Activated B cell treated with CpG ODN at 0.5 μM for 24 hours (primary cell): ENCODE measurements at regions of chr18 and their contacts with region 1.

Region 1: DNA sequence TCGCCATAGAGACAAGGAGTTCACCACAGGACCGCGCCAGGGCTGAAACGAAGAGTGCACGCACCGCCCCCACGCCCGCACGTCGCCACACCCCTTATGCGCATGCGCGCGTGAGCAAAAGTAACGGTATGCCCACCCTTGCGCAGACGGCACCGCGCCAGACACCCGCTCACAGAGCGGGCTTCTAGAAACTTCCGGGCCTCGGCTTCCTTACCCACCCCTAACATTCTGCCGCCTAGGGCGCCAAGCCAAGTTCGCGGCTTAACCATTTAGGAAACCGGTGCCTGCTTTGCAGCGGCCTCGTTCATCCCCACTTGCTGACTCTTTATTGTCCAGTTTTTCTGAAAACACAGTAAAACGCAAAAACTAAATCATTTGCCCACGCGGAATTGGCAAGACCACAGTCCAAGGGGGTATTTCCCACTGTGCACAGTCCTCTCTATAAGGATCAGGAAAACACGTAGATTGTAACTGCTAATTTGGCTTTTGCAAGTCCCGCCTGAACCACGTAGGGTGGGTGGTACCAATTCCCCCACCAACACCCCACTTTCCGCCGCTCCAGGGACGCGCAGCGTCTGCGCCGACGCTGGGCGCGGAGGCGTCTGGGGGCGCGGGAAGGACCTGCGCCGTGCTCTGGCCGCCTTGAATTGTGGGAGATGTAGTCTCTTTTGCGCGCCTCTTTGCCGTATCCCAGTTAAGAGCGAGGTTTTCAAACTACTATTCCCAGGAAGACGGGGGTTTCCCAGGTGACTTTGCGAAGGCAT is at the starts of genes FBXO15 and TIMM21:
- DNase-seq: peak; percentile 96
- ATAC-seq: peak; percentile 85
- H3K4me3 Mint-ChIP-seq: peak within 1 kb of the TSS; percentile 97
- H3K27ac Mint-ChIP-seq: peak within 1 kb of the TSS; percentile 99
- H3K4me1 Mint-ChIP-seq: peaks cover 48% of the 10 kb centered on the region
- H3K27me3 Mint-ChIP-seq: peaks cover 1% of the 10 kb centered on the region
- CTCF ChIP-seq: no peak
- total RNA-seq, gene FBXO15: 0.69 and 0.98 TPM in 2 replicates
- total RNA-seq, gene TIMM21: 23.3 and 27.0 TPM in 2 replicates

Region 2: GRCh38 chr18:74081966-74082741 is 65.8 kb before region 1 on chr18:
- CTCF ChIA-PET with region 1: no interaction called
- POLR2A ChIA-PET with region 1: no interaction called
- intact Hi-C with region 1: loop called (anchors 1 kb)
- DNase-seq: no peak
- ATAC-seq: peak; percentile 99
- H3K4me3 Mint-ChIP-seq: peak overlapping the region; percentile 58
- H3K27ac Mint-ChIP-seq: peak overlapping the region; percentile 84
- H3K4me1 Mint-ChIP-seq: peaks cover 19% of the 10 kb centered on the region
- H3K27me3 Mint-ChIP-seq: no peaks in the 10 kb centered on the region
- CTCF ChIP-seq: no peak

Region 3: DNA sequence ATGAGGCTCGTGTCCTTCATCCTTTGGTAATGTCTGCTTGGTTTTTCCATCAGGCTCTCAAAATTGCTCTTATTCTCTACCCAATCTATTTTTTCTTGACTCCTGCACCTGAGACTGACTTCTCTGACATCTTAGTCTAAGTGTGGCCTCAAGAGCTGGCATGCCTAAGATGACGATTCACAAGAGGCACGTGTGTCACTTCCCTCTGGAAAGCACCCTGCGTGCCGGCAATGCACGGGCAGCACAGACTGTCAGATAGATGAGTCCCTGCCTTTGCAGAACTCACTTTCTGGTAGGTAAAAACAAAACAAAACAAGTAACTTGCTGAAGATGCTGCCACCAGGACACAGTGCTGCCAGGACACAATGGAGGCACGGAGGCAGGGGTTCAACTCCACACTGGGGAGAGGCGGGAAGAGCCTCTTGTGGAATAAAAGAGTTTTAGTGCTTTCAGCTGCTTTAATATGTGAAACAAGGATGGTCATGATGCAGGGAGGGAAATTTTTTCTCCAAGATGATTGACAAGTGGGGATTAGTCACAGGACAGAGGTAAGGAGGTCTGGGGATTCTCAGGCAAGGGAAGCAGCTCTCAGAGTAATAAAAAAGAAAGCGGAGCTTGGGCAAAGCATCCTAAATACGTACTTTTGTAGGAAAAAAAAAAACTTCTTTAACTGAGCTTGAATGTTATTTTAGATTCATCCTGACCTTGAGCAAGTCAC is 116.5 kb after region 1 on chr18:
- CTCF ChIA-PET with region 1: no interaction called
- POLR2A ChIA-PET with region 1: no interaction called
- intact Hi-C with region 1: loop called (anchors 1 kb)
- DNase-seq: peak; percentile 30
- ATAC-seq: peak; percentile 99
- H3K4me3 Mint-ChIP-seq: peak overlapping the region; percentile 59
- H3K27ac Mint-ChIP-seq: peak overlapping the region; percentile 86
- H3K4me1 Mint-ChIP-seq: peaks cover 36% of the 10 kb centered on the region
- H3K27me3 Mint-ChIP-seq: no peaks in the 10 kb centered on the region
- CTCF ChIP-seq: no peak

Region 4: GRCh38 chr18:74334242-74334893 is 186.4 kb after region 1 on chr18:
- CTCF ChIA-PET with region 1: no interaction called
- POLR2A ChIA-PET with region 1: no interaction called
- intact Hi-C with region 1: loop called (anchors 2 kb)
- DNase-seq: no peak
- ATAC-seq: peak; percentile 83
- H3K4me3 Mint-ChIP-seq: peak overlapping the region; percentile 52
- H3K27ac Mint-ChIP-seq: peak overlapping the region; percentile 88
- H3K4me1 Mint-ChIP-seq: peaks cover 44% of the 10 kb centered on the region
- H3K27me3 Mint-ChIP-seq: no peaks in the 10 kb centered on the region
- CTCF ChIP-seq: no peak

Region 5: DNA sequence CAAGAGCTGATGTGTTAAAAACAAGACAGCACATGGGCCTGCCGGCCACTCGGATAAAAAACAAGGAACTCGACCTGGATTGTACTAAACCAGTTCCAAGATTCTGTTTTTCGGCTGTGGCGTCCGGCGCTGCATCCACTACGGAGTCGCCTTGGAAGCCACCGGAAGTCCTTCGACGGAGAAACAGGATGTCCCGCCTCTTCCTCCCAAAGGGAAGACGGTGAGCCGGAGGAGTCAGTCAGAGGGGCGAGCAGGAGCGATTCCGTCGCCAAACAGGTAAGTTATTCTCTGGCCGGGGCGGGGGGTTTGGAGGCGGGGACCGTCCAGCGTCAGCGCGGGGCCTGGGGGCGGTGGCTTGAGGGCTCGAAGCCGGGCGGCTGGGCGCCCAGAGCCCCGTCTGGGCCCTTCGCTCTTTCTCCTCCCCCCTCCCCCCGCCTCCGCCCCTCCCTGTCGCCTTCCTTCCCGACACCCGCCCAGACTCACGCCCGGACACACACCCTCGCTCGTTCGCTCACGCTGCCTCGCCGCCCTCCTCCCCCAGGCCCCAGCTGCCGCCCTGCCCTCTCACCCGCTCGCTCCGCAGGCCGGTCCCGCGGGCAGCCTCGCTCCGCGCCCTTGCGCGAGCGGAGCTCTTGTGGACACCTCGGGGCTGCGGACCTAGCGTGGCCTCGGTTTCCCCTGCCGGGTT is 449.8 kb after region 1 on chr18 and contains the start of gene ZNF407:
- CTCF ChIA-PET with region 1: no interaction called
- POLR2A ChIA-PET with region 1: no interaction called
- intact Hi-C with region 1: loop called (anchors 1 kb)
- DNase-seq: peak; percentile 85
- ATAC-seq: peak; percentile 84
- H3K4me3 Mint-ChIP-seq: peak within 1 kb of the TSS; percentile 96
- H3K27ac Mint-ChIP-seq: peak within 1 kb of the TSS; percentile 98
- H3K4me1 Mint-ChIP-seq: peaks cover 49% of the 10 kb centered on the region
- H3K27me3 Mint-ChIP-seq: no peaks in the 10 kb centered on the region
- CTCF ChIP-seq: no peak
- total RNA-seq, gene ZNF407: 24.0 and 26.7 TPM in 2 replicates